ENCODE measurements at regions of chr16 and their contacts with region 1.

Region 1: GRCh38 chr16:53054670-53055485 is at the start of gene CHD9:
- DNase-seq: peak; percentile 60 to 87 (median 74)
- H3K4me3 ChIP-seq: peak within 1 kb of the TSS; percentile 46 to 94 (median 80)
- H3K27ac ChIP-seq: peak within 1 kb of the TSS in 58 of 59 donors; percentile 15 to 94 (median 82)
- H3K27me3 ChIP-seq: no peaks in the 10 kb centered on the region
- CTCF ChIP-seq: peak; percentile 87 to 100 (median 99)
- total RNA-seq, gene CHD9: 104 to 179 (median 138) TPM

Region 2: GRCh38 chr16:53091466-53092211 is 36.8 kb after region 1 on chr16:
- intact Hi-C with region 1: loop called in 1 of 2 experiments (anchors 5 kb)
- DNase-seq: peak; percentile 26 to 93 (median 84)
- H3K4me3 ChIP-seq: peak overlapping the region in 54 of 59 donors; percentile 1 to 59 (median 30)
- H3K27ac ChIP-seq: peak overlapping the region; percentile 31 to 94 (median 86)
- H3K27me3 ChIP-seq: no peaks in the 10 kb centered on the region
- CTCF ChIP-seq: peak in 12 of 56 donors; percentile 5 to 33 (median 11)

Region 3: DNA sequence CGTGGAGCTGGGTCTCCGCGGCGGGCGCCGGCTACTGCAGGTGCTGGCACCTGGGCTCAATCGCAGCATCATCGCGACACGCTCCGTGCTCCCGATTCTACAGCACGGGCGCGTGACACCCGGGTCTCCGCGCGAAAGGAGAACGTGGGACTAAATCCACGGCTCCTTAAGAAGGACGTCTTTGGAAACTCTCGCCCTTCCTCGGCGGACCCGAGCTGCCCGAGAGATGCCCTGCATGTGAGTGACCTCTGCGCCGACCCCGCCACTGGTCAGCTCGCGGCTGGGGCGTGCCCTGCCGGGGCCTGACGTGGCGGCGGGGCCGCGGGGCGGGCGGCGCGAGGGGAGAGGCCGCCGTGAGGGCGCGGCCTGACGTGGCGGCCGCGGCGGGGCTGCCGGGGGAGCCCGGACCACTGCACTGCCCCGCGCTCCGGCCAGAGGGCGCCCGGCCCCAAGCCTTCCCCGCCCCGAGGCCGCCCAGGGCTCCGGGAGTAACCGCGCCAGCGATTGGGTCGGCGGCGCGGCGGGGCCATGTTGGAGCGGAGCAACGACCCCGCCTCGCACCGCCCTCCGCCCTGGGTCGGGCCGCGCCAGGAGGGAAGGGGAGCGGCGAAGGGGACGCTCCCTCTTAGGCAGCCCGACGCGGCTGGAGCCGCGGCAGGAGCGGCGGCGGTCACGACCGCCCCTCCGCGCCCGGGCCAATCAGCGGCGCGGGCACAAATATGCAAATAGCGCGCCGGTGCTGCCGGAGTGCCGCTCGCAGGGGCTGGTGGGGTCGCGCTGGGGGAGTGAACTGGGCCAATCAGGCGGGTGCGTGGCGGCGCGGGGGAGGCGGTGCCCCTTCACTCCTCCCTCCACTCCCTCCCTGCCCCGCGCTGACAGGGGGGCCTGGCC is 75.5 kb after region 1 on chr16:
- intact Hi-C with region 1: loop called (anchors 1 kb)
- DNase-seq: peak; percentile 88 to 96 (median 94)
- H3K4me3 ChIP-seq: peak overlapping the region; percentile 57 to 93 (median 82)
- H3K27ac ChIP-seq: peak overlapping the region; percentile 77 to 98 (median 94)
- H3K27me3 ChIP-seq: no peaks in the 10 kb centered on the region
- CTCF ChIP-seq: peak; percentile 13 to 88 (median 60)

Region 4: GRCh38 chr16:53198933-53199332 is 144.1 kb after region 1 on chr16:
- intact Hi-C with region 1: no loop called
- DNase-seq: no peak
- H3K4me3 ChIP-seq: no peak overlapping the region
- H3K27ac ChIP-seq: no peak overlapping the region
- H3K27me3 ChIP-seq: no peaks in the 10 kb centered on the region
- CTCF ChIP-seq: no peak

Region 5: GRCh38 chr16:53282975-53283946 is 228.4 kb after region 1 on chr16:
- intact Hi-C with region 1: loop called (anchors 5 kb)
- DNase-seq: peak in 1 of 10 donors; percentile 11
- H3K4me3 ChIP-seq: no peak overlapping the region
- H3K27ac ChIP-seq: peak overlapping the region in 22 of 59 donors; percentile 2 to 56 (median 27)
- H3K27me3 ChIP-seq: no peaks in the 10 kb centered on the region
- CTCF ChIP-seq: peak; percentile 17 to 84 (median 64)

Region 6: GRCh38 chr16:53509906-53510703 is 455.2 kb after region 1 on chr16:
- intact Hi-C with region 1: loop called (anchors 10 kb)
- DNase-seq: peak in 9 of 10 donors; percentile 35 to 77 (median 67)
- H3K4me3 ChIP-seq: peak overlapping the region in 26 of 59 donors; percentile 4 to 48 (median 25)
- H3K27ac ChIP-seq: peak overlapping the region in 23 of 59 donors; percentile 0 to 60 (median 33)
- H3K27me3 ChIP-seq: no peaks in the 10 kb centered on the region
- CTCF ChIP-seq: peak; percentile 76 to 99 (median 93)